ENCODE measurements at regions of chr5 and their contacts with region 1.

Region 1: GRCh38 chr5:39599721-39600431 is 175.1 kb upstream of the DAB2 start:
- DNase-seq: no peak
- H3K4me3 ChIP-seq: no peak overlapping the region
- H3K27ac ChIP-seq: no peak overlapping the region
- H3K4me1 ChIP-seq: no peaks in the 10 kb centered on the region
- H3K27me3 ChIP-seq: no peaks in the 10 kb centered on the region
- CTCF ChIP-seq: peak in 3 of 4 experiments; percentile 27 to 42 (median 28)
- POLR2A ChIP-seq: no peak

Region 2: GRCh38 chr5:39624268-39624886 is 24.5 kb after region 1 on chr5:
- intact Hi-C with region 1: no loop called
- DNase-seq: no peak
- H3K4me3 ChIP-seq: no peak overlapping the region
- H3K27ac ChIP-seq: no peak overlapping the region
- H3K4me1 ChIP-seq: no peaks in the 10 kb centered on the region
- H3K27me3 ChIP-seq: no peaks in the 10 kb centered on the region
- CTCF ChIP-seq: no peak
- POLR2A ChIP-seq: no peak

Region 3: DNA sequence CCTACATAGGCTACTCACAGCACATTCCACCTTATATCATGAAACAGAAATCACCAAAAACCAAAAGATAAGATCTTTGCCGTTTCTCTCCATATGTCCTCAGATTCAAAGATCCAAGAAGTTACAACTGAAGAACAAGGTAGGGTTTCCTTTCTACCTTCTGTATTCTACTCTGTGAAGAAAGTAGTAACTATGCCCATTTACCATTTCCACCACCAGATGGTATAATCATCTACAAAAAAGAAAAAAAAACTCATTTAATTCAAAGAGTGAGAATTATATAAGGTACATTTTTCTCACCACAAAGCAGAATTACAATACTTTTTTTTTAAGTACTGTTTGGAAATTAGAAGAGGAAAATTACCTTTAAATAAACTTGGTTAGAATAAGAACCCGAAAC is 907.2 kb after region 1 on chr5:
- intact Hi-C with region 1: no loop called
- DNase-seq: no peak
- H3K4me3 ChIP-seq: no peak overlapping the region
- H3K27ac ChIP-seq: no peak overlapping the region
- H3K4me1 ChIP-seq: no peaks in the 10 kb centered on the region
- H3K27me3 ChIP-seq: no peaks in the 10 kb centered on the region
- CTCF ChIP-seq: no peak
- POLR2A ChIP-seq: no peak

Region 4: DNA sequence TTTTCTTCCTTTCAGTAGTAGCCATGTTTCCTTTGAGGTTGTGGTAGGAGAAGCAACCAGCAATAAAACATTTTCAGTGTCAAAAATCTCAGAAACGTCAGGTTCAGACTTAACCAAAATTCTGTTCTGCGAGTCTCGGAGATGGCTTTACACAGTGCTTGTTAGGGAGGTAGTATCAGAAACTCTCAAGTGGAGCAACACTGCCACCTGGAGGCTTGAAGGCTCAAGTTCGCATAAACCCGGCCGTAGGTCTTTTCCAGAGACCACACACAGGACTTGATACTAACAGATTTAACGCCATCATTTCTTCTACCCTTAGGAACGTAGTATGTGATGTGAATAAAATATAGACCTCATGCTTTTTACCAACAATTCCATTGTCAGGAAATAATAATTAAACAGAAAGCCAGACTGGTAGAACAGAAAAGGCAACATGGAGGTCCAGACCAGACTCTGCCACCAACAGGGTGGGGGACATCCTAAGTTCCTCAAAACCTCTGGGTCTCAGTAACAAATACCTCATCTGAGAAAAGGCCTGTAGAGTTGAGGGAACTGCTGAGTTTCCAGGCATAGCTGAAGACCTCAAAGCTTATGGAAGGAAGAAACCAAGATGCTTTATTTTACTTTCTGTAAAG is 1088.4 kb after region 1 on chr5:
- intact Hi-C with region 1: loop called (anchors 10 kb)
- DNase-seq: peak; percentile 83 to 85
- H3K4me3 ChIP-seq: no peak overlapping the region
- H3K27ac ChIP-seq: peak overlapping the region; percentile 13 to 47
- H3K4me1 ChIP-seq: no peaks in the 10 kb centered on the region
- H3K27me3 ChIP-seq: no peaks in the 10 kb centered on the region
- CTCF ChIP-seq: peak; percentile 77 to 88 (median 84)
- POLR2A ChIP-seq: no peak